Common myeloid progenitor, CD34-positive (primary cell): ENCODE measurements at regions of chr12 and their contacts with region 1.

Region 1: GRCh38 chr12:124734224-124734788 is 129.4 kb downstream of the SCARB1 start:
- DNase-seq: peak; percentile 80 to 92 (median 90)
- H3K4me3 ChIP-seq: no peak overlapping the region
- H3K27ac ChIP-seq: no peak overlapping the region
- H3K4me1 ChIP-seq: peaks cover 0 to 32% (median 12%) of the 10 kb centered on the region in 4 experiments
- H3K27me3 ChIP-seq: no peaks in the 10 kb centered on the region

Region 2: GRCh38 chr12:124745891-124746570 is 11.7 kb after region 1 on chr12:
- CTCF ChIA-PET with region 1: interaction called, 17 read pairs
- POLR2A ChIA-PET with region 1: interaction called, 3 read pairs
- DNase-seq: peak; percentile 63 to 87 (median 81)
- H3K4me3 ChIP-seq: peak overlapping the region in 4 of 7 experiments; percentile 11 to 65 (median 38)
- H3K27ac ChIP-seq: no peak overlapping the region
- H3K4me1 ChIP-seq: peaks cover 0 to 43% (median 29%) of the 10 kb centered on the region in 4 experiments
- H3K27me3 ChIP-seq: no peaks in the 10 kb centered on the region

Region 3: DNA sequence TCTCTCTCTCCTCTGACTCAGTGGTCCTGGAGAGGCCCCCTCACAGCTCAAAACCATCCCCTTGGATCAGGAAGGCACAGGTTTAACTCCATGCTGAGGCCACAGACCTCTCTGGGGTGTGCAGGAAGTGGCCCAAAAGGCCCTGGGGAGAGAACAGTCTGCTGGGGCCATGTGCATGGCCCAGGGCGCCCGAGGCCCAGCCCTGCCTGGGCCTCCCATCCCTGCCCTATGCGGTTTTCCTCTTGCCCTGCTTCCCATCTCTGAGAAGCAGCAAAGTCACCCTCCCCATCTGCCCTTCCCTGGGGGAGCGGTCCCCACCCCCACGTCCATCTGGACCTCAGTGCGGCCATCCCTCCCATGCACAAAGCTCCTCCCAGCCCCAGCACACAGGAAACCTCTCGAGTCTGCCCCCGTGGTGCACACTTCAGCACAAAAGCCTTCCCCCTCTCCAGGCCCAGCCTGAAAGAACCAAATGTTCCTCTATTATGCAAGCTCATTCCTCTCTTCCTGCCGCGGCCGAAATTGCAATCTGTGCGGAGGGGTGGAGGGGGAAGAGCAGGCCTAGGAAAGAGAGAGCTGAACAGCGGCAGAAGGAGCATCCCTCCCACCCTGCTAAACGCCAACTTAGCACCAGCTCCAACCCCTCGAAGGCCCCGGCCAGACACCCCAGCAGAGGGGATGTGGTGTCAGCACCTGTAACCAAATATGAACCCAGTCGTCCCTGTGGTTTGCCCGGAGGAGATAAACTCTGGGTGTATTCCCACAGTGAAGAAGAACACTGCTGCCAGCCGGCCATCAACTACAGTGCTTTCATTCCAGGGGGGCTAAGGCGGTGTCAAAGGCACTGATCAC is 20.9 kb after region 1 on chr12:
- CTCF ChIA-PET with region 1: interaction called, 12 read pairs
- POLR2A ChIA-PET with region 1: interaction called, 5 read pairs
- DNase-seq: peak; percentile 71 to 90 (median 87)
- H3K4me3 ChIP-seq: peak overlapping the region in 4 of 7 experiments; percentile 3 to 31 (median 26)
- H3K27ac ChIP-seq: peak overlapping the region in 1 of 2 experiments; percentile 14
- H3K4me1 ChIP-seq: peaks cover 0 to 47% (median 41%) of the 10 kb centered on the region in 4 experiments
- H3K27me3 ChIP-seq: no peaks in the 10 kb centered on the region